ENCODE measurements at regions of chr22 and their contacts with region 1.

Region 1: DNA sequence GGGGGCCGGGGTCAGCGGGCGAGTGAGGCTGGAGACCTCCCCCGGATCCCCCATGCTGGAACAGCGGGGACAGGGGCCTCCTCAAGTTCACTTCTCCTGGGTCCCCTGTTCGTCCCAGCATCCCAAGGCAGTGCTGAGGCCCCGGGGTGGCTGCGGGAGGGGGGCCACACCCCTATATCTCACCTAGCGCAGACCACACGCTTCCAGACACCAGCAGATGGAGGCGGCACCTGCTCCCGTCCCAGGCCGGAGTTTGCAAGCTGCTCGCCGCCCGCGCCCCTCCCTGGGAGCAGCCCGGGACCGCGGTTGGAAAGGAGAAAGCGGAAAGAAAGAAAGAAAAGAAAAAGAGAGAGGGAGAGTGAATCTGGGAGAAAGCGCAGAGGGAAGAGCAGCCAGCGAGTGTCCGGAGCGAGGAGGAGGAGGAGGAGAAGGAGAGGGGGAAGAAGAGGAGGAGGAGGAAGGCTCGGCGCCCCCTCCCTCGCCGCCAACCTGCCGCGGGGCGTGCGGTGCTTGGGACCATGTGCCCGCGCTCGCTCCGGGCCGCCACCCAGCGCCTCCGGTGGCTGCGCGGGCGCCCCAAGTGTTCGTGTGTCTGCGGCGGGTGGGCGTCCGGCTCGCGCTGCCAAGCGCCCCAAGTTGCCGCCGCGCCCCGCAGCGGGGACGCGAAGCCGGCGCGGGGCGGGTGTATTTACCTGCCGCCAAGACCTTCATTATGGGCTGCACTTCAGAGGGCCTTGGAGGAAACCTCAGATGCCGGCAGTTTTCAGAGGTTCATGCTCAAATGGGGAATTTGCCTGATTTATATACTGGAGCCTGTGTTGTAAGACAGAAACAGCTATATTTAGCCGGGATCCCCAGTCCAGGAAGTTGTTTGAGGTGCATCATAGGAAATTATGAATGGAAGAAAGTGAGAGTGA is at the start of gene LIF:
- DNase-seq: peak in 2 of 3 donors; percentile 37 to 73
- H3K4me3 ChIP-seq: peak within 1 kb of the TSS in 1 of 3 experiments; percentile 53
- H3K4me3 Mint-ChIP-seq: peak within 1 kb of the TSS; percentile 75 to 90
- H3K27ac ChIP-seq: no peak within 1 kb of the TSS
- H3K27ac Mint-ChIP-seq: peak within 1 kb of the TSS in 3 of 7 donors; percentile 5 to 68 (median 46)
- H3K4me1 ChIP-seq: peaks cover 15 to 20% of the 10 kb centered on the region in 2 donors
- H3K4me1 Mint-ChIP-seq: peaks cover 28% of the 10 kb centered on the region
- H3K27me3 ChIP-seq: peaks cover 13 to 45% of the 10 kb centered on the region in 2 donors
- H3K27me3 Mint-ChIP-seq: peaks cover 47 to 62% (median 51%) of the 10 kb centered on the region in 3 donors
- CTCF ChIP-seq: peak; percentile 12
- polyA plus RNA-seq, gene LIF: 7.0 TPM in 1 of 3 donors, not detected in the others

Region 2: GRCh38 chr22:29716814-29717545 is 529.3 kb before region 1 on chr22:
- intact Hi-C with region 1: no loop called
- DNase-seq: no peak
- H3K4me3 ChIP-seq: no peak overlapping the region
- H3K4me3 Mint-ChIP-seq: peak overlapping the region in 1 of 2 donors; percentile 64
- H3K27ac ChIP-seq: no peak overlapping the region
- H3K27ac Mint-ChIP-seq: no peak overlapping the region
- H3K4me1 ChIP-seq: no peaks in the 10 kb centered on the region
- H3K4me1 Mint-ChIP-seq: no peaks in the 10 kb centered on the region
- H3K27me3 ChIP-seq: peaks cover 16 to 32% of the 10 kb centered on the region in 2 donors
- H3K27me3 Mint-ChIP-seq: peaks cover 38 to 68% (median 56%) of the 10 kb centered on the region in 3 donors
- CTCF ChIP-seq: no peak

Region 3: DNA sequence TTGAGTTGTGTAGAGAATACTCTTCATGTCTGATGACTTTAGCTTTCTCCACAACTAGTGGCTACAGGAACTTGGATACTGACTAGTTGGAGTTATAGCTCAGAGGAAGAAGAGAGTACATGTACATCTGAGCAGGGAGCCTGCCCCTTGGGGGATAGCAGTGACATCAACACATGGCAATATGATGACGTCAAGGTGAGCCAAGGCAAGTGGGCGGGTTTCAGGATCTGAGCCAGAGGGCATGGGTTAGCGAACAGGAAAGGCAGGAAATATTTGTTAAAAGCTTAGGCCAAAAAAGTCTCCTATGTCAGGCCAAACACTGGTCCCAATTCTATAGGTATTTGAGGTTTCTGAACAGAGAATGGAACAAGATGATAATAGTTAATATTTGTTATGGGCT is 208.0 kb before region 1 on chr22:
- intact Hi-C with region 1: loop called in 1 of 2 experiments (anchors 10 kb)
- DNase-seq: no peak
- H3K4me3 ChIP-seq: no peak overlapping the region
- H3K4me3 Mint-ChIP-seq: no peak overlapping the region
- H3K27ac ChIP-seq: no peak overlapping the region
- H3K27ac Mint-ChIP-seq: no peak overlapping the region
- H3K4me1 ChIP-seq: peaks cover 18 to 19% of the 10 kb centered on the region in 2 donors
- H3K4me1 Mint-ChIP-seq: peaks cover 23% of the 10 kb centered on the region
- H3K27me3 ChIP-seq: no peaks in the 10 kb centered on the region
- H3K27me3 Mint-ChIP-seq: peaks cover 0 to 5% (median 1%) of the 10 kb centered on the region in 3 donors
- CTCF ChIP-seq: no peak